ENCODE measurements at regions of chr14 and their contacts with region 1.

Region 1: GRCh38 chr14:78566026-78566858 is 396.1 kb downstream of the NRXN3 start:
- DNase-seq: peak; percentile 12 to 37 (median 28)
- H3K4me3 ChIP-seq: peak overlapping the region in 1 of 3 experiments; percentile 41
- H3K4me3 Mint-ChIP-seq: peak overlapping the region in 1 of 2 donors; percentile 33
- H3K27ac ChIP-seq: no peak overlapping the region
- H3K27ac Mint-ChIP-seq: peak overlapping the region in 1 of 7 donors; percentile 35
- H3K4me1 ChIP-seq: no peaks in the 10 kb centered on the region
- H3K4me1 Mint-ChIP-seq: peaks cover 9% of the 10 kb centered on the region
- H3K27me3 ChIP-seq: no peaks in the 10 kb centered on the region
- H3K27me3 Mint-ChIP-seq: peaks cover 0 to 4% (median 0%) of the 10 kb centered on the region in 3 donors
- CTCF ChIP-seq: peak; percentile 68

Region 2: DNA sequence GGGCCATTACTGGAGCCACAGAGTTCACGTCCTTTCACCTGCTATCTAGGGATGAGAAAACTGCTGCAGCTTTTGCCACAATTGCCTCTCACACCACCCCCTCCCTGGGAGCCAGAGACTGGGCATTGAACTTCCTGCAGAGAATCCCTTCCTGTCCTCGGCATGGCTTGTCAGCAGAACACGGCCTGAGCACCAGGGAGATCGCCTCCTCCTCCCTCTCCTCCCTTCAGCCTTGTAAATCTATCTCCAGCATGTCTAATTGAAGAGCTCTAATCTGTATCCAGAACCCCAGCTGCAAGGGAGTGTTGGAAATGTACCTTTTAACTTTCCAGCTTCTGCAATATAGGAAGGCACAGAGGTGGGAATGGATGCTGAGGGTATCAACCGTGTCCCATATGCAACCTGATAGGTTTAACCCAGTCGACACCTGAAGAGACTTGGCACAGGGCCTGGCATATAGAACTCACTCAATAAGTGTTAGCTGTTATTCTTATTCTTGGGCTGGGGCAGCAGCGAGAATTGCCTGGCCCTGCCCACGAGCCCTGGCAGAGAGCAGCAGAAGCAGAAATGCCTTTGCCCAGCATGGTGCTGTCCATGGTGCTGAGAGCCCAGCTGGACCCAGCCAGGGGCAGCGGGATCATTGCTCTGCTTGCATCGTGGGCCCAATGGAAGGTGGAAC is 1357.8 kb before region 1 on chr14:
- intact Hi-C with region 1: no loop called
- DNase-seq: peak in 2 of 3 donors; percentile 15 to 22
- H3K4me3 ChIP-seq: no peak overlapping the region
- H3K4me3 Mint-ChIP-seq: no peak overlapping the region
- H3K27ac ChIP-seq: no peak overlapping the region
- H3K27ac Mint-ChIP-seq: no peak overlapping the region
- H3K4me1 ChIP-seq: no peaks in the 10 kb centered on the region
- H3K4me1 Mint-ChIP-seq: no peaks in the 10 kb centered on the region
- H3K27me3 ChIP-seq: no peaks in the 10 kb centered on the region
- H3K27me3 Mint-ChIP-seq: peaks cover 4 to 7% (median 5%) of the 10 kb centered on the region in 3 donors
- CTCF ChIP-seq: no peak

Region 3: DNA sequence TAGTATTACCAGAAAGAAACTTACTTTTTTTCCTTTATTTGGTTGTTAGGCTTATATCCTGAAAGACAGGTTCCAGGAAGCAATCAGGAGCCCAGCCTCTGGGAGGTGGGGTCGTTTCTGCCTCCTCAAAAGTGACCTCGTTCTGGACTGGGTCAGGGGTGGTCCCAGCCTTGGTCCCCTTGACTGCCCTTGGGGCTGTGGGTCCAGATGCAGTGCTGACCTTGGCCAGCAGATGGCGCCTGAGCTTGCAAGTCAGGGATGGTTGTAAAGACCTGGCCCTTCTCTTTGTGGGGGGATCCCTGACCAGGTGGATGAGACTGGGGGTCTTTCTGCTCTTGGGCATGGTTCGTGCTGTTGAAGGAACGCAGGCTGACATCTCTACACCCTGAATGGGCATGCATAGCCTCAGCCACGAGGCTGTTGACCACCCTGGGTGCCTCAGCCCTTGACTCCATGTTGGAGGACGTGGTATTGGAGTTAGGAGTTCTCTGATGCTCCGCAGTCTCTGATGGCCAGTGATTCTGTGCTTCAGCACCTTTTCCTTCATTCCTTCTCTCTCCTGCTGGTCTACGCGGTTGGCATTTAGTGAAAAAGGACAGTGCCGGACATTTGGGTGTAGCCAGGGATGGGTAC is 704.0 kb before region 1 on chr14:
- intact Hi-C with region 1: loop called in 1 of 2 experiments (anchors 10 kb)
- DNase-seq: peak; percentile 38 to 60 (median 41)
- H3K4me3 ChIP-seq: no peak overlapping the region
- H3K4me3 Mint-ChIP-seq: no peak overlapping the region
- H3K27ac ChIP-seq: no peak overlapping the region
- H3K27ac Mint-ChIP-seq: peak overlapping the region in 1 of 7 donors; percentile 33
- H3K4me1 ChIP-seq: no peaks in the 10 kb centered on the region
- H3K4me1 Mint-ChIP-seq: no peaks in the 10 kb centered on the region
- H3K27me3 ChIP-seq: no peaks in the 10 kb centered on the region
- H3K27me3 Mint-ChIP-seq: peaks cover 0 to 2% (median 0%) of the 10 kb centered on the region in 3 donors
- CTCF ChIP-seq: peak; percentile 99

Region 4: GRCh38 chr14:78448164-78449094 is 117.8 kb before region 1 on chr14:
- intact Hi-C with region 1: loop called in 1 of 2 experiments (anchors 10 kb)
- DNase-seq: peak; percentile 18 to 47 (median 39)
- H3K4me3 ChIP-seq: no peak overlapping the region
- H3K4me3 Mint-ChIP-seq: no peak overlapping the region
- H3K27ac ChIP-seq: no peak overlapping the region
- H3K27ac Mint-ChIP-seq: no peak overlapping the region
- H3K4me1 ChIP-seq: peaks cover 21 to 24% of the 10 kb centered on the region in 2 donors
- H3K4me1 Mint-ChIP-seq: peaks cover 18% of the 10 kb centered on the region
- H3K27me3 ChIP-seq: no peaks in the 10 kb centered on the region
- H3K27me3 Mint-ChIP-seq: peaks cover 2 to 3% (median 3%) of the 10 kb centered on the region in 3 donors
- CTCF ChIP-seq: peak; percentile 85

Measured in CD14-positive monocyte (primary cell).